BJ (cell line): ENCODE measurements at regions of chr1 and their contacts with region 1.

Region 1: DNA sequence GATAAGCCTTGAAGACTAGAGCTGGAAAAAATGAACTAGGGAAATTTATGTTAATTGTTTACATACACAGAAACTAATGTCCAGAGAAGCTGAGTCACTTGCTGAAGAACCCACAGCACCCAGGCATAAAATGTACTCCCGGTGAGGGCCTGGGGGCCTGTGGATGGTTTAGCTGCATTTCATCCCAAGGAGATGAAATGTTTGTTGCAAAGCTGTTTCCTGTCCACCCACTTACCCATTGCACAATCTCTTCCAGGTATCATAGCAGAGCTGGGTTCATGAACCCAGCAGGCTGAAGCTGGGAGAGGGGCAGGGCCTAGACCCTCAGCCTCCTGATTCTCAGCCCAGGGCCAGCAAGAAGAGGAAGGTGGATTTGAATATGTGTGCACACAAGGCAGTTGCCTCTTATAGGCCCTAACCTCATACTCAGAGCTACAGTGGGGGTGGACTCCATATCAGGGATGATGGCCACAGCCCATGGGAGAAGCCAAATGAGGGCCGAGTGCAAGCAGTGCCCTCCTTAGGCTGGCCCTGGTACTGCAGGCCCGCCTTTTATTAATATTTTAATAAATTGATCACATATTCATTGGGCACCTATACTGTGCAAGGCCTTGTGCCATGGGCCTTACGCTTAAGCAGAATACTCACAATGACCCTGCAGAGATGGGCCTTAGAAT is 110.8 kb downstream of the LACTBL1 start:
- DNase-seq: no peak
- H3K4me3 ChIP-seq: no peak overlapping the region
- H3K27me3 ChIP-seq: no peaks in the 10 kb centered on the region
- CTCF ChIP-seq: peak; percentile 95

Region 2: GRCh38 chr1:22673486-22674409 is 188.2 kb before region 1 on chr1:
- CTCF ChIA-PET with region 1: interaction called, 21 read pairs
- POLR2A ChIA-PET with region 1: no interaction called
- DNase-seq: no peak
- H3K4me3 ChIP-seq: no peak overlapping the region
- H3K27me3 ChIP-seq: peaks cover 28% of the 10 kb centered on the region
- CTCF ChIP-seq: peak; percentile 79

Region 3: DNA sequence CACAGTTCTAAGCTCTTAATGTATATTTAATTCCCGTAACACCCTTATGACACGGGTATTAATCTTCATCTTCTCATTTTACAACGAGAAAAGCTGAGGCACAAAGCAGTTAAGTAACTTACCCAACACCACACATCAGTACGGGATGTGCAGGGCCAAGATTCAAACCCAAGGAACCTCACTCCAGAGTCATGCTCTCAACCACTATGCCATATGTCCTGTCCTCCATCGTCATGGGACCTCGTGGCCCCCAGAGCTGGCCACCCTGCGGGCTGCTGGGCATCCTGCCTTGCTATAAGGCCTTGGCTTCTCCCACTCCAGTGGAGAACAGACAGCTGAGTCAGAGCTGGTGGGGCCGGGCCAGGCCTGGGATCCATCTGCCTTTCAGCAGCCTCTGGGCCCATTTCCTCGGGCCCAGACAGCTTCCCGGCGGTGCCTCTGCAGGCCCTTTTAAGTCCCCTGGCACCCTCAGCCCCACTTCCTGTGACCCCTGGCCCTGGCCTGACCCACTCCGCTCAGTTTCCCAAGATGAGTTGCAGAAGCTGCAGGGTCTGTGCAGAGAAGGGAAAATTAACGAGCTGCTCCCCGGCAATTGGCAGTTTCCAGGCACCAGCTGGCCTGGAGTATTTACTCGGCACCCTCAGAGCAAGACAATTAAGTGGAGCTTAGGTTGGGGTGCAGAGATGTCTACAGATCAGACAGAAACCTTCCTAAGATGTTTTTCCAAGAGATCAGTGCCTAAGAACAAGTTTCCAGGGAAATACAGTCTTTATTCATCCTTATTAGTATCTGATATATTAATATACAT is 53.0 kb before region 1 on chr1:
- CTCF ChIA-PET with region 1: interaction called, 11 read pairs
- POLR2A ChIA-PET with region 1: no interaction called
- DNase-seq: peak; percentile 44
- H3K4me3 ChIP-seq: no peak overlapping the region
- H3K27me3 ChIP-seq: no peaks in the 10 kb centered on the region
- CTCF ChIP-seq: no peak

Region 4: GRCh38 chr1:22850681-22851080 is 11.2 kb before region 1 on chr1:
- CTCF ChIA-PET with region 1: interaction called, 51 read pairs
- POLR2A ChIA-PET with region 1: no interaction called
- DNase-seq: no peak
- H3K4me3 ChIP-seq: no peak overlapping the region
- H3K27me3 ChIP-seq: no peaks in the 10 kb centered on the region; the same call in 1 of the 2 replicates
- CTCF ChIP-seq: no peak

Region 5: DNA sequence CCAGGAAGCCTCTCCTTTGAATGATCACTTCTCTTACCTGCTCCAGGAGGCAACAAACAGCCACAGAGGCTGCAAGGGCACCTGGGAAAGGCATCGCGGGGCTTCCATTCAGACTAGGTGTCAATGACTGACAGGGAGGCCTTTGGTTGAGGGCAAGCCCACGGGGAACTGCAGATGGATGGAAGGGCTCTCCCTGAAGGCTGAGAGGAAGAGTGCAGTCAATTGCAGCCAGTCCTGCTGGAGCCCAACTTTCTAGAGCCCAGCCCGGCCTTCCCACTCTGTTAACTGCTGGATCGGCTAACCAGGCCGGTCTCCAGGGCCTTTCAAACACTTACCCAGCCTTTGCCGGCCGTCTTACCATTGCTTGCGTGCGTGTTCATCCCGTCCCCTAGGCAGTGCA is 21.5 kb after region 1 on chr1:
- CTCF ChIA-PET with region 1: interaction called, 42 read pairs
- POLR2A ChIA-PET with region 1: no interaction called
- DNase-seq: no peak
- H3K4me3 ChIP-seq: no peak overlapping the region
- H3K27me3 ChIP-seq: no peaks in the 10 kb centered on the region
- CTCF ChIP-seq: no peak